Gastrocnemius medialis (tissue), 4 donors: ENCODE measurements at regions of chr3 and their contacts with region 1.

Region 1: DNA sequence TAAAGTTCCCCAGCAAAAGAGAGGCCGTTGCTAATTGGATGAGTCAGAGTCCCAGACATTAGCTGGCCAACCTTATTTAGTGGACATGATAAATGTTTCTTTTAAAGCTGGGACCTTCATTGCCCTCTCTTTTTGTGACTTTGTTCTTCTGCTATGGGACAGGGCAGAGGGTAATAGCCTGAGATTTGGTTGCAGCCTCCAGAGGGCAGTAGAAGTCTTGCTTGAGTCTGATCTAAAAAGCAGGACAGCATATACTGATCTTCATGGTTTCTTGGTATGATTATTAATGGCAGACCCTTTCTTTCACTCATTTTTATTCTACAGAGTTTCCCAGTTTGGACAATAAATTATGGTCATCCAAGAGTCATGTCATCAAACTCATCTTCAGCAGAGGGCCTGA is 25.1 kb upstream of the ZKSCAN7 start:
- DNase-seq: no peak
- ATAC-seq: no peak
- H3K4me3 ChIP-seq: no peak overlapping the region
- H3K27ac ChIP-seq: no peak overlapping the region
- H3K4me1 ChIP-seq: no peaks in the 10 kb centered on the region
- H3K27me3 ChIP-seq: peaks cover 0 to 3% (median under 1%) of the 10 kb centered on the region in 3 donors
- CTCF ChIP-seq: no peak
- POLR2A ChIP-seq: no peak

Region 2: DNA sequence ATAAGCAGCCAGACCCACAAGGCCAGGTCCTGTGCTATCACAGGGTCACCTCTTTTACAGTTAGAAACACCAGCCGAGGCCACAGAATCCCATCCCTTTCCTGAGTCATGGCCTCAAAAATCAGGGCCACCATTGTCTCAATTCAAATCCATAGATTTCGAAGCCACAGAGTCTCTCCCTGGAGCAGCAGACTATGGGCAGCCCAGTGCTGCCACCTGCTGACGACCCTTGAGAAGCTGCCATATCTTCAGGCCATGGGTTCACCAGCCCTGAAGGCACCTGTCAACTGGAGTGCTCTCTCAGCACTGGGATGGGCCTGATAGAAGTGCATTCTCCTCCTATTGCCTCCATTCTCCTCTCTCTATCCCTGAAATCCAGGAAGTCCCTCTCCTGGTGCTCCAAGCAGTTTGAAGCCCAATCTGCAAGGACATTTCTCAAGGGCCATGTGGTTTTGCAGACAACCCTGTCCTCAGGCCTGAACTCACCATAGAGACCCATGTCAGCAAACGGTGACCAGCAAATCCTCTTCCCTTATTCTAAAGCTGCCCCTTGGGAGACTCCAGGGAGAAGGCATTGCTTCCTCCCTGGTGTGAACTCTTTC is 384.0 kb after region 1 on chr3:
- in situ Hi-C with region 1: loop called (anchors 10 to 25 kb)
- intact Hi-C with region 1: loop called (anchors 5 kb)
- DNase-seq: peak; percentile 17 to 33
- ATAC-seq: peak; percentile 47 to 66
- H3K4me3 ChIP-seq: no peak overlapping the region
- H3K27ac ChIP-seq: no peak overlapping the region
- H3K4me1 ChIP-seq: no peaks in the 10 kb centered on the region
- H3K27me3 ChIP-seq: peaks cover 0 to 5% (median 0%) of the 10 kb centered on the region in 3 donors
- CTCF ChIP-seq: peak; percentile 37 to 73 (median 64)
- POLR2A ChIP-seq: no peak